Activated CD8-positive, alpha-beta memory T cell treated with anti-CD3 and anti-CD28 coated beads, Interleukin-2, amount 10 ng/mL, durations not matched to agents 7 days and 5 days (primary cell): ENCODE measurements at regions of chr2 and their contacts with region 1.

Region 1: GRCh38 chr2:219402665-219403515 is 15.2 kb upstream of the DNPEP start:
- DNase-seq: peak; percentile 71
- ATAC-seq: peak; percentile 91
- H3K4me3 Mint-ChIP-seq: no peak overlapping the region
- H3K27ac Mint-ChIP-seq: no peak overlapping the region
- H3K4me1 Mint-ChIP-seq: no peaks in the 10 kb centered on the region
- H3K27me3 Mint-ChIP-seq: peaks cover 14% of the 10 kb centered on the region

Region 2: DNA sequence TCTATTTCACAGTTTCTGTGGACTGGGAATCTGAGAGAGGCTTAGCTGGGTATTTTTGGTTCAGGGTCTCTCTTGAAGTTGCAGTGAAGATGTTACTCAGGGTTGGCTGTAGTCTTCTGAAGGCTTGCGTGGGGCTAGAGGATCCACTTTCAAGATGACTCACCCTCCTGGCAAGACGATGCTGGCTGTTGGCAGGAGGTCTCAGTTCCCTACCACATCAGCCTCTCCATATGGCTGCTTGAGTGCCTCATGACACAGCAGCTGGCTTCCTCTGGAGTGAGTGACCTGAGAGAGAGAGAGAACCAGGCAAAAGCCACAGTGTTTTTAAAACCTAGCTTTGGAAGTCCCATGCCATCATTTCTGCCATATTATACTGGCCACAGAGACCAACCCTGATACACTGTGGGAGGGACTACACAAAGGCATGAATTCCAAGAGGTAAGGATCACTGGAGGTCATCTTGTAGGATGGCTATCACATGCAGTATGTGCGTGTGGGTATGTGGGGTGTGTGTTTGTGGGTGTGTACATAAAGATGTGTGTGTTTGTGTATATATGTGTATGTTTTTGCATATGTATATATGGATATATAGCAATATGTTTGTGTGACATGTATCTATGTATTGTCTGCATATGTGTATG is 40.2 kb before region 1 on chr2:
- CTCF ChIA-PET with region 1: no interaction called
- DNase-seq: peak; percentile 48
- ATAC-seq: peak; percentile 71
- H3K4me3 Mint-ChIP-seq: no peak overlapping the region
- H3K27ac Mint-ChIP-seq: no peak overlapping the region
- H3K4me1 Mint-ChIP-seq: peaks cover 12% of the 10 kb centered on the region
- H3K27me3 Mint-ChIP-seq: peaks cover 28% of the 10 kb centered on the region

Region 3: GRCh38 chr2:219388127-219388844 is 14.6 kb before region 1 on chr2:
- CTCF ChIA-PET with region 1: interaction called, 32 read pairs
- DNase-seq: peak; percentile 98
- ATAC-seq: peak; percentile 77
- H3K4me3 Mint-ChIP-seq: peak overlapping the region; percentile 88
- H3K27ac Mint-ChIP-seq: peak overlapping the region; percentile 73
- H3K4me1 Mint-ChIP-seq: peaks cover 13% of the 10 kb centered on the region
- H3K27me3 Mint-ChIP-seq: peaks cover 4% of the 10 kb centered on the region

Region 4: GRCh38 chr2:219417374-219417773 is 14.5 kb after region 1 on chr2:
- CTCF ChIA-PET with region 1: interaction called, 11 read pairs
- DNase-seq: no peak
- ATAC-seq: no peak
- H3K4me3 Mint-ChIP-seq: no peak overlapping the region
- H3K27ac Mint-ChIP-seq: no peak overlapping the region
- H3K4me1 Mint-ChIP-seq: no peaks in the 10 kb centered on the region
- H3K27me3 Mint-ChIP-seq: peaks cover 51% of the 10 kb centered on the region

Region 5: DNA sequence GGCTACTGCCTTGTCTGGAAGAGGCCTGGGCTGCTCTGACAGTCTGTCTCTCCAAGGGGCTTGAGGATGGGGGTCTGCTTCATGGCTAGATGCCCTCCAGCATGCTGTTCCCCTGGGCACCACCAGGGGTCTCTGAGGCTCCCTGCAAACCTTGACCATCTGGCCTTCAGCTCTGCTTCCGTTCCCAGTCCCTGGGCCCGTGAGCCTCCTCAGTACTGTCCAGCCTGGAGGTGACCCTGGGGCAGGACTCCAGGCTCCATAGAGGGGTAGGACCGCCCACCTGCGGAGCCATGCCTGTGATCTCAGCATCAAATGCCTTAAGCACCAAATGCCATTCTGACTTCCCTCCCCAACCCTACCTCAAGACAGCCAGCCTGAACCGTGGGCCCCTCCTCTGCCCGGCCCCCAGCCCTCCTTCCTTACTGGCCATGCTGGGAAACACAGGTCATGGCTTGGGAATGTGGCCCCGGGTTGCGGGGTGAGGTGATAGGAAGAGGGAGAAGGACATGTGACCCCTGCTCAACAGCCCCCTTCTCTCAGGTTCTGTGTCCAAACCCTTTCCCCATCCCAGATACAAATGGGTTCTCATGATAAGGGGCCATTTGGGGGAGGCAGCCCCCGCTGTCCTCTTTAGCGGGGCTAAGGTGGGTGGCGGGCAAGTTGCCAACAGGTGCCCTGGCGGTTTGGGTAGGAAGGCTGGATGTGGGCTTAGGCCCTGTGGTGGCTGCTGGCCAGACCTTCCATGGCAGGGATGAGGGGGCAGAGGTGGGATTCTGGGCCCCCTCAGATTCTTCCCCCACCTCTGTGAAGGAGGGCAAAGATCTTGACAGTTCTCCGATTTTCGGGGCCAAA is 56.8 kb after region 1 on chr2:
- CTCF ChIA-PET with region 1: interaction called, 11 read pairs
- DNase-seq: peak; percentile 51
- ATAC-seq: peak; percentile 45
- H3K4me3 Mint-ChIP-seq: no peak overlapping the region
- H3K27ac Mint-ChIP-seq: no peak overlapping the region
- H3K4me1 Mint-ChIP-seq: peaks cover 15% of the 10 kb centered on the region
- H3K27me3 Mint-ChIP-seq: no peaks in the 10 kb centered on the region

Region 6: GRCh38 chr2:219603771-219604170 is 200.9 kb after region 1 on chr2:
- CTCF ChIA-PET with region 1: no interaction called
- DNase-seq: no peak
- ATAC-seq: no peak
- H3K4me3 Mint-ChIP-seq: no peak overlapping the region
- H3K27ac Mint-ChIP-seq: no peak overlapping the region
- H3K4me1 Mint-ChIP-seq: peaks cover 5% of the 10 kb centered on the region
- H3K27me3 Mint-ChIP-seq: no peaks in the 10 kb centered on the region